A549 (cell line): ENCODE measurements at regions of chr2 and their contacts with region 1.

Region 1: GRCh38 chr2:26959331-26959730 is 11.1 kb upstream of the MAPRE3 start:
- DNase-seq: no peak
- ATAC-seq: no peak
- H3K4me3 ChIP-seq: no peak overlapping the region
- H3K27ac ChIP-seq: no peak overlapping the region
- H3K4me1 ChIP-seq: 0 out of 3 replicates have a peak, but pooled peaks cover 3% of the 10 kb centered on the region
- CTCF ChIP-seq: no peak
- EP300 ChIP-seq: no peak
- POLR2A ChIP-seq: no peak
- RAD21 ChIP-seq: no peak

Region 2: DNA sequence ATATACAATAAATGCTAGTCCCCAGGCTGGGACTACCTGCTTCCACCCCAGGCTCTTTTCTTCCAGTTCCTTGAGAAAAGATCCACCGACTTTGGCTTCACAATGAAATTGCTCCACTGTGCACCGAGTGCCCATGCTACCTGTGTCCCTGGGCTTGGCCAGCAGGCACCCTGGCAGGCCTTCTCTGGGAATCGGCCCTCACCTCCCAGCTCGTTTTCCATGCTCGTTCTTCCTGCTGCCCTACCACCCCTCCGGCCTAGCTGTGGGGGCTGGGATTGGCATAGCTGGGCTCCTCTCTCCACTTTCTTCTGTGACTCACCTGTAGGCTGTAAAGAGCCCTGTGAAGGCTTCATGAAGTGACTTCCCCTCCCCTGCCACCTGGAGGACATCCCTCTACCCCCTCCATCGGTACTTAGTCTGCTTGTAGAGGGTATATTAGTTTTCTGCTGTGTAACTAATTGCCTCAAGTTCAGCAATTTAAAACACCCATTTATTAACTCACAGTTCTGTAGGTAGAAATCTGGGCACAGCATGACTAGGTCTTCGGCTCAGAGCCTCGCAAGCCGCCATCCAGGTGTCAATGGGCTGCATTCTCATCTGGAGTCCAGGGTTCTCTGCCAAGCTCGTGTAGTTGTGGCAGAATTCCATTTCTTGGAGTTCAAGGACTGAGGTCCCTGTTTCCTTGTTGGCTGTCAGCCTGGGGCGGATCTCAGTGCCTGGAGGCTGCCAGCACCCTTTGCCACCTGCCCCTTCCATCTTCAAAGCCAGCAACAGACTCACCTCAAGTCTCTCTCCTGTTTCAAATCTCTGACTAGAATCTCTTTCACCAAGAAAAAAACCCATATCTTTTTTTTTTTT is 53.8 kb before region 1 on chr2:
- CTCF ChIA-PET with region 1: no interaction called
- POLR2A ChIA-PET with region 1: no interaction called
- DNase-seq: no peak
- ATAC-seq: no peak
- H3K4me3 ChIP-seq: no peak overlapping the region
- H3K27ac ChIP-seq: no peak overlapping the region
- H3K4me1 ChIP-seq: no peaks in the 10 kb centered on the region
- CTCF ChIP-seq: no peak
- EP300 ChIP-seq: no peak
- POLR2A ChIP-seq: no peak
- RAD21 ChIP-seq: no peak

Region 3: GRCh38 chr2:26942543-26943295 is 16.6 kb before region 1 on chr2:
- CTCF ChIA-PET with region 1: interaction called, 141 read pairs
- POLR2A ChIA-PET with region 1: no interaction called
- DNase-seq: peak; percentile 78 to 87
- ATAC-seq: peak; percentile 64 to 82; a peak in 5 of 6 replicates
- H3K4me3 ChIP-seq: no peak overlapping the region
- H3K27ac ChIP-seq: no peak overlapping the region
- H3K4me1 ChIP-seq: peaks cover 8% of the 10 kb centered on the region; the same call in 1 of the 3 replicates
- CTCF ChIP-seq: peak; percentile 96
- EP300 ChIP-seq: no peak
- POLR2A ChIP-seq: no peak
- RAD21 ChIP-seq: peak; percentile 79 to 88

Region 4: DNA sequence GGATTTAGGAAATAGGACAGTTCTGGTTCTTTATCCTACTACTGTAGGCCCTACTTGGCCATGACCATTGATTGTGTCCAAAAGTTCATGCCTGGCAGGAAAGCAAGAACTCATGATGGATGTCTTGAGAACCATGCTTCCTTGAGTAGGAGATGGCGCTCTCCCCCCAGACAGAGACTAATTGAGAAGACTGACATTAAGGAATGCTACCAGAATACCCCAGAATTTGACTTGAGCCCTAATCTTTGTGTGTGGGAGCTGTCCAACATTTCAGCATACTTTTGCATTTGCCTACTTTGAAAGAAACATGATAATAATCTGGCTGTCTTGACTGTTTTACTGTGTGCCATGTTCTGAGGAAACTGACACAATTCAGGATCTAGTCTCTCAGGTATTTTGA is 34.4 kb after region 1 on chr2:
- CTCF ChIA-PET with region 1: interaction called, 33 read pairs
- POLR2A ChIA-PET with region 1: no interaction called
- DNase-seq: no peak
- ATAC-seq: no peak
- H3K4me3 ChIP-seq: no peak overlapping the region
- H3K27ac ChIP-seq: no peak overlapping the region
- H3K4me1 ChIP-seq: peaks cover 3% of the 10 kb centered on the region; the same call in 1 of the 3 replicates
- CTCF ChIP-seq: no peak
- EP300 ChIP-seq: no peak
- POLR2A ChIP-seq: no peak
- RAD21 ChIP-seq: no peak

Region 5: GRCh38 chr2:27032495-27033252 is 73.3 kb after region 1 on chr2 and contains the start of gene TMEM214:
- CTCF ChIA-PET with region 1: interaction called, 65 read pairs
- POLR2A ChIA-PET with region 1: no interaction called
- DNase-seq: peak; percentile 91 to 95
- ATAC-seq: peak; percentile 97 to 99
- H3K4me3 ChIP-seq: peak within 1 kb of the TSS; percentile 80
- H3K27ac ChIP-seq: peak within 1 kb of the TSS; percentile 91 to 95
- H3K4me1 ChIP-seq: peaks cover 23% of the 10 kb centered on the region
- CTCF ChIP-seq: no peak
- EP300 ChIP-seq: no peak
- POLR2A ChIP-seq: peak; percentile 82
- RAD21 ChIP-seq: no peak
- polyA plus RNA-seq, gene TMEM214: 74.9 and 106 TPM in 2 replicates

Region 6: DNA sequence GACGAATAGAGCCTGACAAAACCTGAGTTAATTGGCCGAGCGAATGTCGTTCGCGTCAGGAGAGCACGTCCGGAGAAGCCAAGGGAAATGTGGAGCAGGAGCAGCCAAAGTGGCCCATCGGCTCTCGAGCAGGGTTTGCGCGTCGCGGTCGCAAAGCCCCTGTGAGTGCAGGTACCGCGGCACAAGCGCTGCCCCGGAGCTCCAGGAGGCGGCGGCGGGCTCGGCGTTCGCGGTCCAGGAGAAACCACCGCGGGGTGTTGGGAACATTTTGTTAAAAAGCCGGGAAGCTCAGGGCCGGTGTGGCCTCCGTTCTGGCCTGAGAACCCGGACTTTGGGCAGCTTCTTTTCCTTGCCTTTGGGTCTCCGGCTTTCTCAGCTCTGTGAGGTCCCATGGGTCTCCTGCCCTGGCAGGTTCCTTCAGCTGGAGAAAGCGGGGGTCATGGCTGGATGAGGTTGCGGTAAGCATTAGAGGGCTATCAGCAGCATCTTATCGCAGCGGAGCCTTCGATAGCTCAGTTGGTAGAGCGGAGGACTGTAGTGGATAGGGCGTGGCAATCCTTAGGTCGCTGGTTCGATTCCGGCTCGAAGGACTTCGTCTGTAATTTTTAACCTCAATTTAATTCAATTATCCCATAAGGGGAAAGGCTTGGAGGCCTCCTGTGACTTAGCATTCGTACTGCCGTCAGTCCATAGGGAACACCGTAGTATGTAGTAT is 91.1 kb after region 1 on chr2:
- CTCF ChIA-PET with region 1: interaction called, 16 read pairs
- POLR2A ChIA-PET with region 1: interaction called, 13 read pairs
- DNase-seq: peak; percentile 95 to 97
- ATAC-seq: peak; percentile 77 to 86
- H3K4me3 ChIP-seq: peak overlapping the region; percentile 86
- H3K27ac ChIP-seq: peak overlapping the region; percentile 83 to 93
- H3K4me1 ChIP-seq: peaks cover 13% of the 10 kb centered on the region; the same call in 2 of the 3 replicates
- CTCF ChIP-seq: no peak
- EP300 ChIP-seq: no peak
- POLR2A ChIP-seq: peak; percentile 97
- RAD21 ChIP-seq: no peak

Region 7: GRCh38 chr2:27086090-27086723 is 126.9 kb after region 1 on chr2:
- CTCF ChIA-PET with region 1: interaction called, 87 read pairs
- POLR2A ChIA-PET with region 1: interaction called, 4 read pairs
- DNase-seq: peak; percentile 95 to 97
- ATAC-seq: peak; percentile 73 to 89
- H3K4me3 ChIP-seq: peak overlapping the region; percentile 70
- H3K27ac ChIP-seq: peak overlapping the region; percentile 90 to 91
- H3K4me1 ChIP-seq: peaks cover 17% of the 10 kb centered on the region
- CTCF ChIP-seq: peak; percentile 98
- EP300 ChIP-seq: no peak
- POLR2A ChIP-seq: peak; percentile 41; the same call in 1 of the 2 replicates
- RAD21 ChIP-seq: peak; percentile 31 to 63; a peak in 4 of 5 replicates